Activated T-helper 1 cell treated with anti-CD3 and anti-CD28 coated beads, Interleukin-12 subunit alpha, Interleukin-12 subunit beta, Interleukin-2, Interleukin-4 antibody, amounts not matched to agents 30 ng/mL and 10 ng/mL and 1 ng/mL, durations not matched to agents 14 hours and 24 hours and 36 hours (primary cell): ENCODE measurements at regions of chr12 and their contacts with region 1.

Region 1: GRCh38 chr12:124713436-124714082 is 146.1 kb upstream of the NCOR2 start:
- DNase-seq: peak; percentile 60
- H3K4me3 Mint-ChIP-seq: peak overlapping the region; percentile 62
- H3K27ac Mint-ChIP-seq: peak overlapping the region; percentile 93
- H3K4me1 Mint-ChIP-seq: peaks cover 24% of the 10 kb centered on the region
- H3K27me3 Mint-ChIP-seq: peaks cover 33% of the 10 kb centered on the region

Region 2: GRCh38 chr12:124545508-124546418 is 167.8 kb before region 1 on chr12:
- intact Hi-C with region 1: loop called (anchors 1 kb)
- DNase-seq: peak; percentile 57
- H3K4me3 Mint-ChIP-seq: peak overlapping the region; percentile 26
- H3K27ac Mint-ChIP-seq: peak overlapping the region; percentile 58
- H3K4me1 Mint-ChIP-seq: peaks cover 50% of the 10 kb centered on the region
- H3K27me3 Mint-ChIP-seq: peaks cover 3% of the 10 kb centered on the region

Region 3: DNA sequence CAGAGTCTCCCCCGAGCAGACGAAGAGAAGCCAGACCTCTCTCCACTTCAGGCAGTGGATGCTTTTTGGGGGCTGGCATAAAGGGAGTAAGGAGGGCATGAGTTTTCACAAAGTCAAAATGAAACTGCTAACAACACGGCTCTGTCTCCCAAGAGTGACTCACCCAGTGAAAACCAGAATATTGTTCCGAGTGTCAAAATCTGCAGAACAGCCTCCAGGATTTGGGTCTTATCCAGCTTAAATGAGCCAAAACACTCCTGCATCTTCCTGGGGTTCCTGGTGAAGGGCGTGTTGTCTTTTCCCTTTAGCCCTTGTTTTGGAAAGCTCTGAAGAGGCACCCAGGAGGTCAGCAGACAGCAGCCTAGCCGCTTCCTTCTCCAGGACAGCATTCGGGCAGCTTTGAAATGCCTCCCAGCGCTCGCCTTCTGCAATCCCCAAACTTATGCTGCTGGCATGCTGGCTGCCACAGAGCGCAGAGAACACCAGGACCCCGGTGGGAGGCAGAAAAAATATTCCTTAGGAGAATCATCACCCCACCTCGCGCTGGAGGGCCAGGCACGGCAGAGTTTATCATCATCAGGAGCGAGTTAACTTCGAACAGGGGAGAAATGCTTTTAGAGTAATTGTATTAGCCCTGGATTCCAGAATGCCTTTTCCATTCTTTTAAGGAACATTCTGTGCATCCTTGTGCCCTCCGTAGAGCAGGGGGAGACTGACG is 28.4 kb before region 1 on chr12:
- intact Hi-C with region 1: loop called (anchors 1 kb)
- DNase-seq: no peak
- H3K4me3 Mint-ChIP-seq: no peak overlapping the region
- H3K27ac Mint-ChIP-seq: no peak overlapping the region
- H3K4me1 Mint-ChIP-seq: peaks cover 34% of the 10 kb centered on the region
- H3K27me3 Mint-ChIP-seq: peaks cover 13% of the 10 kb centered on the region

Region 4: GRCh38 chr12:124761871-124762270 is 48.3 kb after region 1 on chr12:
- intact Hi-C with region 1: loop called (anchors 1 kb)
- DNase-seq: no peak
- H3K4me3 Mint-ChIP-seq: no peak overlapping the region
- H3K27ac Mint-ChIP-seq: peak overlapping the region; percentile 29
- H3K4me1 Mint-ChIP-seq: peaks cover 30% of the 10 kb centered on the region
- H3K27me3 Mint-ChIP-seq: peaks cover 2% of the 10 kb centered on the region